ENCODE measurements at regions of chr12 and their contacts with region 1.

Region 1: GRCh38 chr12:53352331-53353256 is 16.4 kb upstream of the SP7 start:
- DNase-seq: peak; percentile 79
- CTCF ChIP-seq: peak; percentile 81

Region 2: GRCh38 chr12:53365245-53365904 is 12.8 kb after region 1 on chr12:
- CTCF ChIA-PET with region 1: interaction called, 32 read pairs
- POLR2A ChIA-PET with region 1: no interaction called
- DNase-seq: no peak
- CTCF ChIP-seq: no peak

Region 3: DNA sequence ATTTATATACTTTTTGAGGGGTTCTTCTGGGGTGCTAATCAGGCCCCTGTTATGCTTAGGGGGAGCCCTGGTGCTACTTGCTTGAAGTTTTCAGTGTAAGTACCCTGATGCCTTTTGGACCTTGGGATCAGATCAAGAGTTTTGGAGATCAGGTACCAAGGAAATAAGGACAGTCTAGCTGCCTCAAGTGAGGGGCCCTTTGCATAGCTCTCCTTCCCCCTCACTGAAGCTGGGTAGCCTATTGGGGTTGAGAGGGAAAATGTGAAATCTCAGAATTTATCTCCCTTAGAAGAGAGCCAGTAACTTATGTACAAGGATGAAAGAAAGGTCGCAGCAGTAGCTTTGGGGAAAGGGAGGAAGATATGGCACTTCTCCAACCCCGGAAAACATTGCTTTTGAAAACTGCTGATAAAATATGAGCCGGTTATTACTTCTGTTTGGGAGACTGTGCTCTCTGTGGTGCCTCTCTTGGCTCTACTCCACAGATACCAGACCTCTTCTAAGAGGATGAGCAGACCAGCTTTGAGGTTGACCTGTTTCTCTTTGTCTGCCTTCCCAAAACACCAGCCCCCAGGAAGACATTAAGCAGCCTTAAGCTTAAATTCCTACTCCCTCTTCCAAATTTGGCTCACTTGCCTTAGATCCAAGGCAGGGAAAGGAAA is 62.3 kb after region 1 on chr12:
- CTCF ChIA-PET with region 1: interaction called, 381 read pairs
- POLR2A ChIA-PET with region 1: no interaction called
- DNase-seq: peak; percentile 2
- CTCF ChIP-seq: no peak

Region 4: DNA sequence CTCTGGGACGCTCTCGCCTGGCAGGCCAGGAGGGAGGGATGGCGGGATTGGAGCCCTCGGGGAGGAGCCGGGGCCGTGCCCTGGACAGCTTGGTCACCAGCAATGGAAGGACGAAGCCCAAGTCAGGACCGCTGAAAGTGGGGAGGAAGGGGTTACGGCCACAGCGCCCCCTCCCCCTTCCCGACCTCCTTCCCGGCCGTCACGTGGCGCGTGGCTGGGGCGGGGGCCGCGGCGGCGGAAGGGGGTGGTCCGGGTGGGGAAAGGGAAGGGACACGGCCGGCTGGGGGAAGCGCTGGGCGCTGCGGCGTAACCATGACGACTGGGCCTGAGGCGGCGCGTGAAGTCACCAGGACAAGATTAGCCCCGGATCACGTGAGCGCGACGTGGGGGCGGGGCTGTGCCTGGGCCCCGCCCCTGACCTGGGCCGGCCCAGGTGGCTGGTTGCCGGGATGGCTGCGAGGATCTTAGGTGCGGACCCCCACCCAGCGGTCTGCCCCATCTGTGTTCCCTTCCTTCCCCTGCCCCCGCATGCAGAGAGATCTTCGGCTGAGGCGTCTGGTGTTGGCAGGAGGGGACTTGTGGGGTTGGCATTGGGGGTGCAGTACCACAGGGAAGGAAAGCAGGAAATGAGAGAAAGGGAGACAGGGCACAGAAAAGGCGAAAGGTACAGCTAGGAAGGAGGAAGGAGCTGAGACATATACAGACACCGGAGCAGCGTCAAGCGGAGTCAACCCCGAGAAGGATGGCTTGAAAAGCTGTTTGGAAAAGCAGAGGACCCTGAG is 140.4 kb after region 1 on chr12:
- CTCF ChIA-PET with region 1: interaction called, 12 read pairs
- POLR2A ChIA-PET with region 1: no interaction called
- DNase-seq: peak; percentile 93
- CTCF ChIP-seq: no peak

Region 5: DNA sequence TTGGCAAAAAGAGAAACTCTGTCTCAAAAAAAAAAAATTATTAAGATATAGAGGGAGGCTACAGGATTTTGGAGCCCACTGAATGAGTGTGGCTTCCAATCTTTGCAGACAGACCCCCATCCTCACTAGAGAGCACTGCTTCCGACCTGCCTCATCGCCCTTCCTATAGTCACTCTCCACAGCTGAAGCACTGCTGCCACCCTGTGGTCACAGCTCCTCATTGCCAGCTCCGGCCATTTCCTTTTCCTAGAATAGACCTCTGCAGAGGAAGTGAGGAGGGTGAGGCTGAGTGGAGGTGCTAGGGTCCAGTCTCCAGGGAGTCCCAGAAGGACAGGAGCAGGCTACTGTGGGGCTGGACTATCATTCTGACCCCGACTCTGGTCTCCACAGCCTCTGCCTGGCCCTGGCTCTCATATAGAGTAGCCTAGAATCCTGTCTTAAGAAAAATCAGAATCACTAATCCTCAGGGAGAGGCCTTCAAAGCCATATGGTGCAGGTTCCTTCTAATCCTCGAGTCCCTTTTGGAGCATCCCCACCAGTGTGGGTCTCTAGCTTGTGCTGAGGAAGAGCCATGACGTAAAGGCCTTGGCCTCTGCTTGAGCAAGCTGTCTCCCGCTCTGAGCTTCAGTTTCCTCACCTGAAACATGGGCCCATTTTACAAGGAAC is 156.1 kb after region 1 on chr12:
- CTCF ChIA-PET with region 1: interaction called, 68 read pairs
- POLR2A ChIA-PET with region 1: no interaction called
- DNase-seq: peak; percentile 82
- CTCF ChIP-seq: peak; percentile 99